Aorta (tissue), 5 donors: ENCODE measurements at regions of chr18 and their contacts with region 1.

Region 1: GRCh38 chr18:48951448-48952286 is 902 bp upstream of the SMAD7 start:
- DNase-seq: peak; percentile 93 to 94
- ATAC-seq: peak; percentile 85
- H3K4me3 ChIP-seq: peak overlapping the region; percentile 65 to 99
- H3K27ac ChIP-seq: peak overlapping the region; percentile 96
- H3K4me1 ChIP-seq: peaks cover 6 to 9% of the 10 kb centered on the region in 2 donors
- H3K27me3 ChIP-seq: no peaks in the 10 kb centered on the region

Region 2: DNA sequence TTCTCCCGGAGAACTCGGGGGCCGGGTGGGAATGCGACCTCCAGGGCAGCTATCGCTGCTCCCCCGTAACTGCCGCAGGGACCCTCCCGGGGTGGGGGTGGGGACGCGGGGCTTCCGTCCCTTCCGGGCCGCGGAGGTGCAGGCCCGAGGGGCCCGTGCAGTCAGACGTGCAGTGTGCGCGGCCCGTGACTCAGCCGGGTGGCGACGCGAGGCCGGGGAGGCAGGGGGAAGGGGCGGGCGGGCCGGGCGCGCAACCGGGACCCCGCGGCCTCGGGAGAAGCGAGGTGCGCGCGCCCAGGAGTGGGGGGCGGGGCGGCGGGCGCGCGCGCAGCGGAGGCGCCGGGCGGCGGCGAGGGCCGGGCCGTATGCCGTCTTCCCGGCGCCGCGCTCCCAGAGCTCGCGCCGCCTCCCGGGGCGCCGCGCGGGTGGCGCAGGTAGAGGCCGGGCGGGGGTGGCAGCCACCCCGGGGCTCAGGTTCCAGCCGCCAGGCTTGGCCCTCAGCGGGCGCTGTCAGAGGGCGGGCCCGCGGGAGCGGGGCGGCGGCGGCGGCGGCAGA is 24.1 kb after region 1 on chr18:
- intact Hi-C with region 1: loop called in 1 of 2 experiments (anchors 1 kb)
- DNase-seq: peak; percentile 77 to 91
- ATAC-seq: peak; percentile 75
- H3K4me3 ChIP-seq: peak overlapping the region; percentile 44 to 75
- H3K27ac ChIP-seq: peak overlapping the region; percentile 32 to 72
- H3K4me1 ChIP-seq: no peaks in the 10 kb centered on the region
- H3K27me3 ChIP-seq: no peaks in the 10 kb centered on the region

Region 3: GRCh38 chr18:48997985-48998831 is 46.5 kb after region 1 on chr18:
- intact Hi-C with region 1: loop called in 1 of 2 experiments (anchors 2 kb)
- DNase-seq: peak; percentile 91 to 93
- ATAC-seq: peak; percentile 75
- H3K4me3 ChIP-seq: no peak overlapping the region
- H3K27ac ChIP-seq: peak overlapping the region; percentile 20 to 78
- H3K4me1 ChIP-seq: no peaks in the 10 kb centered on the region
- H3K27me3 ChIP-seq: no peaks in the 10 kb centered on the region

Region 4: DNA sequence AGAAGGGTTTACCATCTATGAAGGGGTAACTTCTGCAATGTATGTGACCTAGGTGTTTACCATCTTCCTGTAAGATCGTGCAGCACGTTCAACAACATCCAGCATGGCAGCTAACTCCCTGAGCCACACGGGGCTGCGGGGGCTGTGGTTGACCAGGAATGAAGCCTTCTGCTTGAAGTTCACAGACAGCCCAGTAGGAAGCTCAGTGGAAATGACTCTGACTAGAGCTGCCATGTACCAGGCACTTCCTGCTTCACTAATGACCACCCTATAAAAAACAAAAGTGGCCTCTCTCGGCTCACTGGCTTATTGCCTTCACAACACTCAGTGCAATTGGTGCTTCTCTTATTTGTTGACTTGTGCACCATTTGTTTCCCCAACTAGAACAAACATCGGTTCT is 98.8 kb after region 1 on chr18:
- intact Hi-C with region 1: no loop called
- DNase-seq: no peak
- ATAC-seq: no peak
- H3K4me3 ChIP-seq: no peak overlapping the region
- H3K27ac ChIP-seq: no peak overlapping the region
- H3K4me1 ChIP-seq: peaks cover 0 to 2% of the 10 kb centered on the region in 2 donors
- H3K27me3 ChIP-seq: no peaks in the 10 kb centered on the region

Region 5: DNA sequence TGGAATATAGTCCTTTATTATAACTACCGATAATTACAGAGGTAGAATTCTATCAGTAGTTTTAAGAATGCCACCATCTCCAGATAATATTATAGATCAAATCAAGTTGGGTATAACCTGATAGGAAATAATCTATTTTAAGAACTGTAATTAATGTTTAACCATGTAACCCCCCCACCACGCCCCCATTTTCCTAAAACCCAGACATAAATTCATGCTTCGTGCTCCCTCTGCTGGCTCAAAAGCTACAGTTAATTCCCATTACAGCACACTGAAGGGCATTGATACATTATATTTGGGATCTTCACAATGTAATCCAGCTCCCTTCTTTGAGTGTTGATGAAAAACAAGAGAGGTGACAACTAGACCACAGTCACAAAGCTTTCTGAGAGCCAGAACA is 227.1 kb after region 1 on chr18:
- intact Hi-C with region 1: loop called in 1 of 2 experiments (anchors 5 kb)
- DNase-seq: no peak
- ATAC-seq: no peak
- H3K4me3 ChIP-seq: no peak overlapping the region
- H3K27ac ChIP-seq: no peak overlapping the region
- H3K4me1 ChIP-seq: no peaks in the 10 kb centered on the region
- H3K27me3 ChIP-seq: no peaks in the 10 kb centered on the region

Region 6: GRCh38 chr18:49193897-49194296 is 242.2 kb after region 1 on chr18:
- intact Hi-C with region 1: no loop called
- DNase-seq: no peak
- ATAC-seq: no peak
- H3K4me3 ChIP-seq: no peak overlapping the region
- H3K27ac ChIP-seq: no peak overlapping the region
- H3K4me1 ChIP-seq: no peaks in the 10 kb centered on the region
- H3K27me3 ChIP-seq: no peaks in the 10 kb centered on the region